ENCODE measurements at regions of chr11 and their contacts with region 1.

Region 1: DNA sequence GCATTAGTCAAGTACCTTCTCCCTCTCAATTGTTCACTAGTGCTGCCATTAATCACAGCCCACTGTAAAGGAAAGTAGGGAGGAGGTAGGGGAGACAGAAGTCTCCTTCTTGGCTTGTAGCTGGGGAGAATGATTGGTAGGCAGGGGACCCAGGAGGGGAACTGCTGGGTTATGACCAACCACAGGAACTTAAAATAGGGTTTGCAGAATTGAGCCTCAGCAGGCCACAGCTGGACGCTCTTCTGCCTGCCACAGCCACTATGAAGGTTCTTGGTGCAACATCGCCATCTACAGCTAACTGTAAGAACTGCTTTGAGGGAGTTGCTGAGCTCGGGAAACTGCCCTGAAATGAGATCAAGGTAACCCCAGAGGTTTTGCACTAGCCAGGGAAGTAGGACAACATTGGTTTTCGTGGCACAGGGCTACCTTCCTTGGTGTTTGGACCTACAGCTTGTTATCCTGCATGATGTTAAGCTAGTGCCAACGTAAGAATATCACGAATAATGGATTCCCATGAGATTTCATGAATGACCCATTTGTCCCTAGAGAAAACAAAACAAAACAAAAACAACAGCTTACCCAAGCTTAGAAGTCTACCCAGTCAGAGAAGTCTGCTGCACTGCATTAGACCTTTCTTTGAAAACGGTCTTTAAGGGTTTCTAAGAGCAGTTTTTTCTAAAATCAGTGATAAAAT is 787.1 kb upstream of the API5 start:
- DNase-seq: peak in 4 of 5 donors; percentile 23 to 28 (median 26)
- ATAC-seq: peak in 3 of 4 donors; percentile 53 to 78 (median 63)
- H3K4me3 ChIP-seq: no peak overlapping the region
- H3K27ac ChIP-seq: no peak overlapping the region
- H3K4me1 ChIP-seq: no peaks in the 10 kb centered on the region
- H3K27me3 ChIP-seq: peaks cover 0 to 4% (median 0%) of the 10 kb centered on the region in 9 donors
- CTCF ChIP-seq: peak; percentile 50 to 71 (median 64)
- POLR2A ChIP-seq: no peak

Region 2: GRCh38 chr11:42462558-42463310 is 61.9 kb before region 1 on chr11:
- intact Hi-C with region 1: no loop called
- DNase-seq: no peak
- ATAC-seq: no peak
- H3K4me3 ChIP-seq: no peak overlapping the region
- H3K27ac ChIP-seq: no peak overlapping the region
- H3K4me1 ChIP-seq: no peaks in the 10 kb centered on the region
- H3K27me3 ChIP-seq: no peaks in the 10 kb centered on the region
- CTCF ChIP-seq: no peak
- POLR2A ChIP-seq: no peak

Region 3: GRCh38 chr11:43282607-43283440 is 758.1 kb after region 1 on chr11:
- intact Hi-C with region 1: loop called in 1 of 10 experiments (anchors 10 kb)
- DNase-seq: peak in 2 of 5 donors; percentile 33 to 73
- ATAC-seq: peak in 2 of 4 donors; percentile 18 to 60
- H3K4me3 ChIP-seq: no peak overlapping the region
- H3K27ac ChIP-seq: no peak overlapping the region
- H3K4me1 ChIP-seq: no peaks in the 10 kb centered on the region
- H3K27me3 ChIP-seq: peaks cover 0 to 45% (median 4%) of the 10 kb centered on the region in 9 donors
- CTCF ChIP-seq: peak; percentile 76 to 93 (median 90)
- POLR2A ChIP-seq: no peak